Sigmoid colon (tissue), 7 donors: ENCODE measurements at regions of chr6 and their contacts with region 1.

Region 1: GRCh38 chr6:85354761-85355618 is 94.9 kb upstream of the NT5E start:
- DNase-seq: peak; percentile 85
- H3K4me3 ChIP-seq: no peak overlapping the region
- H3K27ac ChIP-seq: no peak overlapping the region
- H3K4me1 ChIP-seq: no peaks in the 10 kb centered on the region
- H3K27me3 ChIP-seq: no peaks in the 10 kb centered on the region
- CTCF ChIP-seq: peak; percentile 55 to 95 (median 90)
- EP300 ChIP-seq: no peak
- POLR2A ChIP-seq: no peak

Region 2: GRCh38 chr6:84926189-84927155 is 428.5 kb before region 1 on chr6:
- intact Hi-C with region 1: no loop called
- DNase-seq: no peak
- H3K4me3 ChIP-seq: no peak overlapping the region
- H3K27ac ChIP-seq: no peak overlapping the region
- H3K4me1 ChIP-seq: no peaks in the 10 kb centered on the region
- H3K27me3 ChIP-seq: no peaks in the 10 kb centered on the region
- CTCF ChIP-seq: no peak
- EP300 ChIP-seq: no peak
- POLR2A ChIP-seq: no peak

Region 3: GRCh38 chr6:85482905-85483700 is 128.1 kb after region 1 on chr6:
- intact Hi-C with region 1: loop called (anchors 1 kb)
- DNase-seq: peak; percentile 89
- H3K4me3 ChIP-seq: no peak overlapping the region
- H3K27ac ChIP-seq: peak overlapping the region; percentile 16 to 68 (median 42)
- H3K4me1 ChIP-seq: peaks cover 0 to 11% (median 4%) of the 10 kb centered on the region in 4 donors
- H3K27me3 ChIP-seq: no peaks in the 10 kb centered on the region
- CTCF ChIP-seq: peak; percentile 83 to 100 (median 98)
- EP300 ChIP-seq: no peak
- POLR2A ChIP-seq: no peak

Region 4: GRCh38 chr6:85537055-85537494 is 182.1 kb after region 1 on chr6:
- intact Hi-C with region 1: loop called (anchors 2 kb)
- DNase-seq: no peak
- H3K4me3 ChIP-seq: no peak overlapping the region
- H3K27ac ChIP-seq: no peak overlapping the region
- H3K4me1 ChIP-seq: no peaks in the 10 kb centered on the region
- H3K27me3 ChIP-seq: no peaks in the 10 kb centered on the region
- CTCF ChIP-seq: peak in 2 of 4 experiments; percentile 26 to 66
- EP300 ChIP-seq: no peak
- POLR2A ChIP-seq: no peak